CD8-positive, alpha-beta T cell (primary cell): ENCODE measurements at regions of chr14 and their contacts with region 1.

Region 1: GRCh38 chr14:72904840-72905561 is 11.1 kb upstream of the DPF3 start:
- DNase-seq: peak; percentile 23 to 80 (median 66)
- ATAC-seq: peak; percentile 78
- H3K4me3 ChIP-seq: no peak overlapping the region
- H3K4me3 Mint-ChIP-seq: no peak overlapping the region
- H3K27ac ChIP-seq: no peak overlapping the region
- H3K27ac Mint-ChIP-seq: no peak overlapping the region
- H3K4me1 ChIP-seq: no peaks in the 10 kb centered on the region
- H3K4me1 Mint-ChIP-seq: no peaks in the 10 kb centered on the region
- H3K27me3 ChIP-seq: peaks cover 0 to 3% of the 10 kb centered on the region in 2 experiments
- H3K27me3 Mint-ChIP-seq: peaks cover 21% of the 10 kb centered on the region
- CTCF ChIP-seq: peak; percentile 95

Region 2: GRCh38 chr14:71138448-71139293 is 1766.3 kb before region 1 on chr14:
- CTCF ChIA-PET with region 1: no interaction called
- POLR2A ChIA-PET with region 1: no interaction called
- intact Hi-C with region 1: loop called in 1 of 2 experiments (anchors 5 kb)
- DNase-seq: peak; percentile 36 to 75 (median 64)
- ATAC-seq: peak; percentile 23
- H3K4me3 ChIP-seq: no peak overlapping the region
- H3K4me3 Mint-ChIP-seq: no peak overlapping the region
- H3K27ac ChIP-seq: no peak overlapping the region
- H3K27ac Mint-ChIP-seq: no peak overlapping the region
- H3K4me1 ChIP-seq: peaks cover 18% of the 10 kb centered on the region
- H3K4me1 Mint-ChIP-seq: peaks cover 25% of the 10 kb centered on the region
- H3K27me3 ChIP-seq: no peaks in the 10 kb centered on the region
- H3K27me3 Mint-ChIP-seq: no peaks in the 10 kb centered on the region
- CTCF ChIP-seq: peak; percentile 93

Region 3: GRCh38 chr14:72516936-72517700 is 387.9 kb before region 1 on chr14:
- CTCF ChIA-PET with region 1: interaction called, 343 read pairs
- POLR2A ChIA-PET with region 1: no interaction called
- intact Hi-C with region 1: loop called (anchors 1 kb)
- DNase-seq: peak; percentile 46 to 86 (median 71)
- ATAC-seq: peak; percentile 60
- H3K4me3 ChIP-seq: no peak overlapping the region
- H3K4me3 Mint-ChIP-seq: no peak overlapping the region
- H3K27ac ChIP-seq: no peak overlapping the region
- H3K27ac Mint-ChIP-seq: no peak overlapping the region
- H3K4me1 ChIP-seq: peaks cover 32% of the 10 kb centered on the region
- H3K4me1 Mint-ChIP-seq: peaks cover 41% of the 10 kb centered on the region
- H3K27me3 ChIP-seq: no peaks in the 10 kb centered on the region
- H3K27me3 Mint-ChIP-seq: no peaks in the 10 kb centered on the region
- CTCF ChIP-seq: peak; percentile 74

Region 4: GRCh38 chr14:72714094-72714493 is 190.9 kb before region 1 on chr14:
- CTCF ChIA-PET with region 1: no interaction called
- POLR2A ChIA-PET with region 1: no interaction called
- intact Hi-C with region 1: loop called in 1 of 2 experiments (anchors 10 kb)
- DNase-seq: peak; percentile 12 to 82 (median 39)
- ATAC-seq: peak; percentile 84
- H3K4me3 ChIP-seq: peak overlapping the region; percentile 10 to 12
- H3K4me3 Mint-ChIP-seq: peak overlapping the region; percentile 43
- H3K27ac ChIP-seq: no peak overlapping the region
- H3K27ac Mint-ChIP-seq: no peak overlapping the region
- H3K4me1 ChIP-seq: peaks cover 42% of the 10 kb centered on the region
- H3K4me1 Mint-ChIP-seq: peaks cover 43% of the 10 kb centered on the region
- H3K27me3 ChIP-seq: no peaks in the 10 kb centered on the region
- H3K27me3 Mint-ChIP-seq: no peaks in the 10 kb centered on the region
- CTCF ChIP-seq: no peak

Region 5: GRCh38 chr14:72745991-72746980 is 158.7 kb before region 1 on chr14:
- CTCF ChIA-PET with region 1: no interaction called
- POLR2A ChIA-PET with region 1: no interaction called
- intact Hi-C with region 1: no loop called
- DNase-seq: peak in 1 of 9 experiments; percentile 37
- ATAC-seq: no peak
- H3K4me3 ChIP-seq: no peak overlapping the region
- H3K4me3 Mint-ChIP-seq: no peak overlapping the region
- H3K27ac ChIP-seq: no peak overlapping the region
- H3K27ac Mint-ChIP-seq: no peak overlapping the region
- H3K4me1 ChIP-seq: no peaks in the 10 kb centered on the region
- H3K4me1 Mint-ChIP-seq: no peaks in the 10 kb centered on the region
- H3K27me3 ChIP-seq: no peaks in the 10 kb centered on the region
- H3K27me3 Mint-ChIP-seq: no peaks in the 10 kb centered on the region
- CTCF ChIP-seq: no peak

Region 6: DNA sequence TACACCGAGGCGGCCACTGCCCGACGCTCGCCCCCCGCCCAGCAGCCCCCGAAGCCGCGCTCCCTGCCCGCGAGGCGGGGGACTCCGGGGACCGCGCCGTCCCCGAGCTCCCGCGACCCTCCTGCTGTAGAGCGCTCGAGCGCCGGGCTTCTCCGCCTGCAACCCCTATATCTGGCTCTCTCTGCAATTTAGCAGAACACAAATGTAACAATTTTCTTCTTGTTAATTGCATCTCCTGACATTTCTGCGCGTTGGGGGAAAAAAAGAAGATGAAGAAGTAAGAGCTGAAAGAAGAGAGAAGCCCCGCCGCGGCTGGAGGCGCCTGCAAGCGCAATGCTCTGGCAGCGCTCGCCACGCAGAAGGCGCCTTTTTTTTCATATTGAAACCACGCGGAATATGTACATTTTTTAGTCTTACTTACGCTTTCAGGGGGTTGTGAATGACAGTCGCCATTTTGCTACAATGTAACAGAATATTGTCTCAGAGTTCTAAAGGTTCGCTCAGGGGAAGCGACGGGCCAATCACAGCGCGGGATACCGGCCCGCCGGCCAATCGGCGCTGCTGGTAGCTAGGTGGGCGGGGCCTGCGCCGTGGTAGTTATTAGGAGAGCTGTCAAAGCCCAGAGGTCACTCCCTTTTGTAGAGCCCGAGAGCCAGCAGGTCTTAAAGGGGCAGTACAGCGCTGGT is 11.2 kb before region 1 on chr14 and contains the start of gene DPF3:
- CTCF ChIA-PET with region 1: interaction called, 10 read pairs
- POLR2A ChIA-PET with region 1: interaction called, 5 read pairs
- intact Hi-C with region 1: no loop called
- DNase-seq: peak; percentile 84 to 94 (median 92)
- ATAC-seq: peak; percentile 95
- H3K4me3 ChIP-seq: peak within 1 kb of the TSS; percentile 74 to 84
- H3K4me3 Mint-ChIP-seq: peak within 1 kb of the TSS; percentile 97
- H3K27ac ChIP-seq: peak within 1 kb of the TSS in 1 of 2 experiments; percentile 26
- H3K27ac Mint-ChIP-seq: peak within 1 kb of the TSS; percentile 2
- H3K4me1 ChIP-seq: peaks cover 21% of the 10 kb centered on the region
- H3K4me1 Mint-ChIP-seq: peaks cover 30% of the 10 kb centered on the region
- H3K27me3 ChIP-seq: peaks cover 8 to 27% of the 10 kb centered on the region in 2 experiments
- H3K27me3 Mint-ChIP-seq: peaks cover 49% of the 10 kb centered on the region
- CTCF ChIP-seq: no peak
- total RNA-seq, gene DPF3: 0.28 to 0.65 TPM

Region 7: DNA sequence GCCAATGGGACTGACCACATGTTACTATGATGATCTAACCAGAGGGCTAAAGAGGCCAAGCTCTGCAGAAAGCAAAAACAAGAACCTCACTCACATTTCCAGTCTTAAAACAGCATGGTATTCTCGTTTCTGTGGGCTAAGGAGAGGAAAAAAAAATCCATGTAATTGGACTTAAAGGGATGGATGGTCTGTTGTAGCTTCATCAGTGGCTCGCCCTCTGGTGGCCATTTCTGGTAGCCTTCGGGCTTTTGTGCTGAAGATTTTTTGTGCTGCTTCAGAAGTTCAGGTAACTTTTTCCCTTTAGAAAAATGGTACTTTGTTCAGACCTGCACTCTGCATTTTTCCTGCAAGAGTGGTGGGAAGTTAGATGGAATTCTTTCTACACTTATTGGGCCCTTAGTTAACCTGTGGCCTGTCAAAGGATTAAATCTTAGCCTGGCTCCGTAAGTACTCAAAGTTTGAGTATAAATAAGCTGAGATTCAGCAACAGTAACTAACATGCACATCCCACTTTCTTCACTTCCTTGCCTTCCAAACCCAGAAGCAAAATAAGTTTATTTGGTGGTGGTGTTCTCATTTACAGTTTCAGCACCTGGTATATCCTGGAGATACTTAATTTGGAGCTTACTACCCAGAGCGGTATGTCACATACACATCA is 43.6 kb after region 1 on chr14:
- CTCF ChIA-PET with region 1: interaction called, 10 read pairs
- POLR2A ChIA-PET with region 1: no interaction called
- intact Hi-C with region 1: no loop called
- DNase-seq: peak; percentile 39 to 73 (median 60)
- ATAC-seq: peak; percentile 29
- H3K4me3 ChIP-seq: no peak overlapping the region
- H3K4me3 Mint-ChIP-seq: no peak overlapping the region
- H3K27ac ChIP-seq: no peak overlapping the region
- H3K27ac Mint-ChIP-seq: no peak overlapping the region
- H3K4me1 ChIP-seq: no peaks in the 10 kb centered on the region
- H3K4me1 Mint-ChIP-seq: no peaks in the 10 kb centered on the region
- H3K27me3 ChIP-seq: no peaks in the 10 kb centered on the region
- H3K27me3 Mint-ChIP-seq: no peaks in the 10 kb centered on the region
- CTCF ChIP-seq: peak; percentile 86